IMR-90 (cell line): ENCODE measurements at regions of chr14 and their contacts with region 1.

Region 1: DNA sequence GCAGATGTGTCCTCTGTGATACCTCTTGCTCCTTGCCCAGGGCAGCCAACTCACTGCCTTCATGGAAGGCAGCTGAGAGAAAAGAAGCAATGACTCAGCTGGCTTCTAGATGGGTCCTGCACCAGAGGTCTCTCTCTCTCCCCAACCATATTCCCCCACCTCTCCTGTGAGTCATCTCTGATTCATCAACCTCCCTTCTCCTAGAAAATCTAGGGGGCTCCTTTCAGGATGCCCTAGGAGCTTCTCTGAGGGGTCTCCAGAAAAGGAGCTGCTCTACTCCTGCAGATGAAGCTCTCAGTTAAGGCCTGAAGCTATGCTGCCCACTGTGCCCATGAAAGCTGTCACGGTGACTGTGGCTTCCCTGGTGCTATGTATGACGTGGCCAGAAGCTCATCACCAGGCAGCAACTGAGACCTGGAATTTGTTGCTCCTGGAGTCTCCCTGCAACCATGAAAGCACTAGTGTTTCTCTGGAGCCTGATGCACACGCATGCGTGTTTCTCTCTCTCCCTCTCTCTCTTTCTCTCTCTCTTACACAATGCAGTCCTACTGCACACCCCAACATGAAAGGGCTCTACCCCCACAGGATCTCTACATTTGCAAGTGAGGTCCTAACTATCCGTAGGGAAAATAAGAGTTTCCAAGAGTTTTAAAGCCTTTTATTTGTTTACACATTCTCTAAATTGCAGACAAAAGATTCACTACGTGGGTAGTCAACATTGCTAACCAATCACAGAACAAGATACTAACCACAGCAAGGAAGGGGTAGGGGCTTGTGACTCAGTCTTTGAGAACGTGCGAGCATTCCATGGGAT is 285.3 kb downstream of the DPF3 start:
- DNase-seq: peak; percentile 97
- ATAC-seq: peak; percentile 76
- H3K4me3 ChIP-seq: no peak overlapping the region
- H3K27ac ChIP-seq: peak overlapping the region; percentile 95
- H3K4me1 ChIP-seq: peaks cover 27% of the 10 kb centered on the region
- H3K27me3 ChIP-seq: no peaks in the 10 kb centered on the region
- CTCF ChIP-seq: 0 out of 2 replicates have a peak, but pooled peaks have one; percentile 4
- POLR2A ChIP-seq: no peak
- RAD21 ChIP-seq: no peak; the same call in 1 of the 2 replicates

Region 2: DNA sequence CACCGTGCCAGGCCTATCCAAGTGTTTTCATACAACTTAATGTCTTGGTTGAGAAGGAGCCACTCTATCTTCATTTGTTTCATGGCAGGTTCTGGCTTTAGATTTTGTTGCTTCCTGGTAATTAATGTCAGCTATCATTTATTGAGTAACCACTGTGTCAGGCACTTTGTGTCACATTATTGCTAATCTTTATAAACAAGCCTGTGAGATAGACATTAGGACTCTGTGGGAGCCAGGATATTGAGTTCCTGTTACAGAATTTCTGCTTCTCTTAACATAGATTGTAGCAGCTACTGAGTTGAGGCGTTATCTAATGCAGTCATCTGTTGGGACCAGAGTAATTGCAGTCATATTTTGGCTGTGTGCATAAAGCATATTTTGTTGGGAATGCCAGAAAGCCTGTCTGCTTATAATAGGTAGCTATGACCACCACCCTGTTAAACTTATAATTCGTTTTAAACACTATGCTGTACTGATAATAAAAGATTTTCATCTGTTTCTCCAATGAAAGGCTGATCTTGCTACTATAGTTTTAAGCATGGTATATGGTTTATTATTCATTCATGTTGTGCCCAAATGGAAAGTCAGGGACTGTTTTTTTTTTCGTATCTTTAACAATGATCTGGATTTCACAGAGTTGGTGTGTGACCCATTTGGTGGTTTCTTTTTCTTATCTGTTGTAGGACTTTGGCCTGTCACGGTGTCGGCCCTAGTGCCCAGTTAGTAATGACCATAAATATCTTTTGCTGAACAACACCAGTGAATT is 1268.8 kb before region 1 on chr14:
- CTCF ChIA-PET with region 1: no interaction called
- POLR2A ChIA-PET with region 1: no interaction called
- dilution Hi-C with region 1: no loop called
- in situ Hi-C with region 1: no loop called
- intact Hi-C with region 1: no loop called
- DNase-seq: no peak
- ATAC-seq: no peak; the same call in 1 of the 2 replicates
- H3K4me3 ChIP-seq: no peak overlapping the region
- H3K27ac ChIP-seq: no peak overlapping the region
- H3K4me1 ChIP-seq: peaks cover 2% of the 10 kb centered on the region
- H3K27me3 ChIP-seq: no peaks in the 10 kb centered on the region
- CTCF ChIP-seq: no peak
- POLR2A ChIP-seq: no peak
- RAD21 ChIP-seq: no peak

Region 3: GRCh38 chr14:72665259-72665658 is 56.7 kb after region 1 on chr14:
- CTCF ChIA-PET with region 1: no interaction called
- POLR2A ChIA-PET with region 1: interaction called, 4 read pairs
- dilution Hi-C with region 1: no loop called
- in situ Hi-C with region 1: no loop called
- intact Hi-C with region 1: loop called (anchors 1 kb)
- DNase-seq: peak; percentile 100
- ATAC-seq: peak; percentile 87
- H3K4me3 ChIP-seq: peak overlapping the region; percentile 33; the same call in 1 of the 2 replicates
- H3K27ac ChIP-seq: peak overlapping the region; percentile 82
- H3K4me1 ChIP-seq: peaks cover 23% of the 10 kb centered on the region
- H3K27me3 ChIP-seq: no peaks in the 10 kb centered on the region
- CTCF ChIP-seq: no peak
- POLR2A ChIP-seq: no peak
- RAD21 ChIP-seq: 0 out of 2 replicates have a peak, but pooled peaks have one; percentile 11

Region 4: DNA sequence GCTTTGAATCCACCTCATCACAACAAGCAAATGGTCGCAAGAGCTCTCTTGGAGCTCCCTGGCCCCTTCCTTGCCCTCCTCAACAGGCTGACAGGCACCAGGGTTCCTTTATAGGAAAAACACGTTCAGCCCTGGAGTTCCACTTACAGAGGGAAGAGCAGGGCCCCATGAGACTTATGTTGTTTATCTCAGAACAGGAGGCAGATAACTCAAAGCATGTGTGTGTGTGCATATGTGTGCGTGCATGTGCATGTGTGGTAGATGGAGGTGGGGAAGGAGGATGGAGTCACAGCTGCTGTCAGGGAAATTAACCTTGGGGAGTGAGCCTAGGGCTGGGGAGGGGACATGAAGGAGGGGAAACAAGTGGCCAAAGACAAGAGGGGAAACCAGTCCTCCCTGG is 147.2 kb after region 1 on chr14:
- CTCF ChIA-PET with region 1: no interaction called
- POLR2A ChIA-PET with region 1: no interaction called
- dilution Hi-C with region 1: no loop called
- in situ Hi-C with region 1: no loop called
- intact Hi-C with region 1: no loop called
- DNase-seq: peak; percentile 19
- ATAC-seq: no peak
- H3K4me3 ChIP-seq: no peak overlapping the region
- H3K27ac ChIP-seq: no peak overlapping the region
- H3K4me1 ChIP-seq: no peaks in the 10 kb centered on the region
- H3K27me3 ChIP-seq: no peaks in the 10 kb centered on the region
- CTCF ChIP-seq: no peak
- POLR2A ChIP-seq: no peak
- RAD21 ChIP-seq: no peak